GM12878 (cell line): ENCODE measurements at regions of chr1 and their contacts with region 1.

Region 1: DNA sequence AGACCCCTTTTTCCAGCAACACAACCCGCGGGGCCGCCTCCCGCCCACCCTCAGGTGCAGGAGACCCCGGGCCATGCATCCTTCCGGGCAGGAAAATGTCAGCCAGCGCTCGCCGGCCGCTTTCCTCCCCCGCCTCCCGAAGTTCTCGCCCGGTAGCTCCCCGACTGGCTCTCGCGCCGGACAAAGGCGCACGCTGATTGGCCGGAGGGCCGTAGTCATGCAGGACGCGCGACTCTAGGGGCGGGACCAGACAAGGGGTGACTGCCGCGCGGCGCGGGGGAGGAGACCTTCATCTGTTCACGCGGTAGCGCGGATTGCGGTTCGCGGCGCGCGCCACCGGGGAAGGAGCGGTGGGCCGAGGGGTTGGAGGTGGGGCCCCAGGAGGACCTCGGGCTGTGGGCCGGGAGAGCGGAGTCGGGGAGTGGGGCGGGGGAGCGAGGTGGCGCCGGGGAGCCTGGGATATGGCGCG is at the start of gene FLVCR1:
- DNase-seq: peak; percentile 79
- ATAC-seq: peak; percentile 97
- H3K4me3 ChIP-seq: peak within 1 kb of the TSS; percentile 98
- H3K27ac ChIP-seq: peak within 1 kb of the TSS; percentile 79
- H3K4me1 ChIP-seq: peaks cover 6% of the 10 kb centered on the region
- H3K27me3 ChIP-seq: no peaks in the 10 kb centered on the region
- CTCF ChIP-seq: no peak
- EP300 ChIP-seq: no peak
- POLR2A ChIP-seq: peak; percentile 85
- RAD21 ChIP-seq: no peak
- polyA plus RNA-seq, gene FLVCR1: 7.1 to 8.6 TPM

Region 2: DNA sequence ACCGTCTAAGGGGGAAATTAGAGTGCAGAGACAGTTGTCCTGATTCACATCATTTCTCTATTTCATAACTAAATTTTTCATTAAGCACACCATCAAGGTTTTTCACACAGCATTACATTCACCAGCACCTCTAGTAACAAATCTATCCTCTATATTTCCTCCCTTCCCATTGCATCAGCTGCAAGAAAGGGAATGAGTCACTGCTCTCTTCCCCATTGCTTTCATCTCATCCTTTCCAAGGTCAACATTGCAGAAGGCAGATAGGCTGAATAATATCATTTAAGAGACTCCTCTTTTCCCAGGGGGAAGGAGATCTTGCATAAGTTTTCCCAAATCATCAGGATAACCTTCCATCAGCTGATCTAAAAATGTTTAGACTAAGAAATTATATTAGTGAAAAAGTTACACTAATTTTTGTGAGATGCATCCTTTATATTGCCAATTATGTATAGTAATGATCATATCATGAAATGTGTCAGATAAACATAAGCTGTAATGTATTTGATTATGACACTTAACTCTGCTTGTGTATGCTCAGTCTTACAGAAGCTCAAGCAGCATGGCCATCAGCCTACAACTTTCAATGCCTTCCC is 827.0 kb before region 1 on chr1:
- CTCF ChIA-PET with region 1: no interaction called
- POLR2A ChIA-PET with region 1: no interaction called
- RAD21 ChIA-PET with region 1: no interaction called
- SMC1A ChIA-PET with region 1: no interaction called
- in situ Hi-C with region 1: no loop called
- intact Hi-C with region 1: no loop called
- DNase-seq: no peak
- ATAC-seq: no peak
- H3K4me3 ChIP-seq: peak overlapping the region; percentile 45; the same call in 1 of the 2 replicates
- H3K27ac ChIP-seq: peak overlapping the region; percentile 56; the same call in 1 of the 2 replicates
- H3K4me1 ChIP-seq: peaks cover 31% of the 10 kb centered on the region
- H3K27me3 ChIP-seq: no peaks in the 10 kb centered on the region
- CTCF ChIP-seq: no peak
- EP300 ChIP-seq: no peak
- POLR2A ChIP-seq: no peak
- RAD21 ChIP-seq: no peak

Region 3: DNA sequence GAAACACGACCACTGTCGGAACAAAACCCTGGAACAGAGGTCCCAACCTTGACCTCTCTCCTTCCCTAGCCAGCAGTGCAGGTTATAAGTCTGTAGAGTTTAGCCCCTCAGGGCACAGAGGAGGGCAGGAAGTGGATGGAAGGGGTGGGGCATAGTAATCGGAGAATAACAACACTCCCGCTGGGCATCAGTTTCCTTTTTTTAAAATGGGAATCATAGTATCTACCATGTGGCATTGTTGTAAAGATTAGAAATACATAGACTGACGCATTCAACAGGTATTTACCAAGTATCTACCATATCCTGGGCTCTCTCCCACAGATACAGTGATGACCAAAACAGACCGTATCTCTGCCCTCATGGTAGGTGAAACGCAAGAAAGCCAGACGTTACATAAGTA is 274.4 kb before region 1 on chr1:
- CTCF ChIA-PET with region 1: no interaction called
- POLR2A ChIA-PET with region 1: no interaction called
- RAD21 ChIA-PET with region 1: no interaction called
- SMC1A ChIA-PET with region 1: no interaction called
- in situ Hi-C with region 1: no loop called
- intact Hi-C with region 1: no loop called
- DNase-seq: no peak
- ATAC-seq: no peak
- H3K4me3 ChIP-seq: no peak overlapping the region
- H3K27ac ChIP-seq: no peak overlapping the region
- H3K4me1 ChIP-seq: peaks cover 15% of the 10 kb centered on the region
- H3K27me3 ChIP-seq: no peaks in the 10 kb centered on the region
- CTCF ChIP-seq: no peak
- EP300 ChIP-seq: no peak
- POLR2A ChIP-seq: no peak
- RAD21 ChIP-seq: no peak

Region 4: DNA sequence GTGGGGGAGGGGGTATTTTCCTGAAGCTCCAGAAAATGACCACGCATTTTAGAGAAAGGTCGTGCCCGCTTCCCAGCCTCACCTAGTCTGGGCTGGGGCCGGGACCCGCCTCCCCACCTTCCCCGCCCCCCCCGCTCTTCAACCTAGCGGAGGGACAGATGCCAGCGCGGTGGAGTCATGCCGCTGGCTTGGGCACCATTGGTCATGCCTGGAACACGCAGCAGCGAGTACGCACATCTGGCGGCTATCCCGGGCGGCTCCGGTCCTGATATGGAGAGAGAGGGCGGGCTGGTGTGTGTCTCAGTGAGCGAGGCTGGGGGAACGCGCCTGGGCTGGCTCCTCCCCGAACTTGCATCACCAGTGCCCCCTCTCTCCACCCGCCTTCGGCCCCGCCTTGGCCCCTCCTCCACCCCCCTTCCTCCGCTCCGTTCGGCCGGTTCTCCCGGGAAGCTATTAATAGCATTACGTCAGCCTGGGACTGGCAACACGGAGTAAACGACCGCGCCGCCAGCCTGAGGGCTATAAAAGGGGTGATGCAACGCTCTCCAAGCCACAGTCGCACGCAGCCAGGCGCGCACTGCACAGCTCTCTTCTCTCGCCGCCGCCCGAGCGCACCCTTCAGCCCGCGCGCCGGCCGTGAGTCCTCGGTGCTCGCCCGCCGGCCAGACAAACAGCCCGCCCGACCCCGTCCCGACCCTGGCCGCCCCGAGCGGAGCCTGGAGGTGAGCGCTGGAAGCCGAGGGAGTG is 249.6 kb before region 1 on chr1 and contains the start of gene ATF3:
- CTCF ChIA-PET with region 1: no interaction called
- POLR2A ChIA-PET with region 1: no interaction called
- RAD21 ChIA-PET with region 1: interaction called, 3 read pairs
- SMC1A ChIA-PET with region 1: no interaction called
- in situ Hi-C with region 1: no loop called
- intact Hi-C with region 1: loop called (anchors 10 kb)
- DNase-seq: peak; percentile 94
- ATAC-seq: peak; percentile 80
- H3K4me3 ChIP-seq: peak within 1 kb of the TSS; percentile 87
- H3K27ac ChIP-seq: peak within 1 kb of the TSS; percentile 62
- H3K4me1 ChIP-seq: peaks cover 19% of the 10 kb centered on the region
- H3K27me3 ChIP-seq: peaks cover 0 to 6% of the 10 kb centered on the region in 2 experiments; a peak in 1 of 4 replicates
- CTCF ChIP-seq: no peak
- EP300 ChIP-seq: peak in 1 of 2 experiments; percentile 9; a peak in 1 of 4 replicates
- POLR2A ChIP-seq: peak; percentile 99
- RAD21 ChIP-seq: no peak
- polyA plus RNA-seq, gene ATF3: 3.0 to 3.4 TPM

Region 5: GRCh38 chr1:212814537-212815334 is 43.3 kb before region 1 on chr1:
- CTCF ChIA-PET with region 1: interaction called, 6 read pairs
- POLR2A ChIA-PET with region 1: interaction called, 8 read pairs
- RAD21 ChIA-PET with region 1: interaction called, 18 read pairs
- SMC1A ChIA-PET with region 1: interaction called, 35 read pairs
- in situ Hi-C with region 1: no loop called
- intact Hi-C with region 1: loop called (anchors 5 kb)
- DNase-seq: no peak
- ATAC-seq: no peak
- H3K4me3 ChIP-seq: no peak overlapping the region
- H3K27ac ChIP-seq: no peak overlapping the region
- H3K4me1 ChIP-seq: no peaks in the 10 kb centered on the region; the same call in 1 of the 2 replicates
- H3K27me3 ChIP-seq: no peaks in the 10 kb centered on the region
- CTCF ChIP-seq: peak; percentile 30 to 44 (median 36); a peak in 4 of 6 replicates
- EP300 ChIP-seq: no peak
- POLR2A ChIP-seq: no peak
- RAD21 ChIP-seq: peak; percentile 60

Region 6: GRCh38 chr1:212847549-212847948 is 10.5 kb before region 1 on chr1 and contains the start of gene SPATA45:
- CTCF ChIA-PET with region 1: interaction called, 4 read pairs
- POLR2A ChIA-PET with region 1: interaction called, 4 read pairs
- RAD21 ChIA-PET with region 1: no interaction called
- SMC1A ChIA-PET with region 1: interaction called, 3 read pairs
- in situ Hi-C with region 1: no loop called
- intact Hi-C with region 1: loop called (anchors 1 kb)
- DNase-seq: no peak
- ATAC-seq: no peak
- H3K4me3 ChIP-seq: no peak within 1 kb of the TSS
- H3K27ac ChIP-seq: no peak within 1 kb of the TSS
- H3K4me1 ChIP-seq: no peaks in the 10 kb centered on the region
- H3K27me3 ChIP-seq: no peaks in the 10 kb centered on the region
- CTCF ChIP-seq: no peak
- EP300 ChIP-seq: no peak
- POLR2A ChIP-seq: no peak
- RAD21 ChIP-seq: no peak
- polyA plus RNA-seq, gene SPATA45: 0.31 TPM in 1 of 2 experiments, not detected in the other

Region 7: GRCh38 chr1:212879947-212880690 is 22.1 kb after region 1 on chr1:
- CTCF ChIA-PET with region 1: interaction called, 3 read pairs
- POLR2A ChIA-PET with region 1: interaction called, 12 read pairs
- RAD21 ChIA-PET with region 1: no interaction called
- SMC1A ChIA-PET with region 1: interaction called, 16 read pairs
- in situ Hi-C with region 1: no loop called
- intact Hi-C with region 1: no loop called
- DNase-seq: no peak
- ATAC-seq: no peak
- H3K4me3 ChIP-seq: no peak overlapping the region
- H3K27ac ChIP-seq: no peak overlapping the region
- H3K4me1 ChIP-seq: no peaks in the 10 kb centered on the region
- H3K27me3 ChIP-seq: no peaks in the 10 kb centered on the region
- CTCF ChIP-seq: no peak
- EP300 ChIP-seq: no peak
- POLR2A ChIP-seq: no peak
- RAD21 ChIP-seq: no peak

Region 8: GRCh38 chr1:212950243-212951125 is 92.5 kb after region 1 on chr1 and contains the start of gene VASH2:
- CTCF ChIA-PET with region 1: interaction called, 3 read pairs
- POLR2A ChIA-PET with region 1: interaction called, 11 read pairs
- RAD21 ChIA-PET with region 1: interaction called, 8 read pairs
- SMC1A ChIA-PET with region 1: interaction called, 10 read pairs
- in situ Hi-C with region 1: no loop called
- intact Hi-C with region 1: loop called (anchors 5 kb)
- DNase-seq: peak; percentile 59
- ATAC-seq: peak; percentile 92
- H3K4me3 ChIP-seq: peak within 1 kb of the TSS; percentile 95
- H3K27ac ChIP-seq: peak within 1 kb of the TSS; percentile 92
- H3K4me1 ChIP-seq: peaks cover 48% of the 10 kb centered on the region
- H3K27me3 ChIP-seq: no peaks in the 10 kb centered on the region
- CTCF ChIP-seq: no peak; a peak in 1 of 6 replicates
- EP300 ChIP-seq: no peak
- POLR2A ChIP-seq: peak; percentile 71
- RAD21 ChIP-seq: no peak
- polyA plus RNA-seq, gene VASH2: 5.4 to 6.5 TPM